ENCODE measurements at regions of chr1 and their contacts with region 1.

Region 1: GRCh38 chr1:27300341-27301051 is 21.5 kb upstream of the TMEM222 start:
- DNase-seq: peak; percentile 32
- ATAC-seq: peak; percentile 96
- H3K4me3 ChIP-seq: no peak overlapping the region
- H3K27ac ChIP-seq: no peak overlapping the region; the same call in 1 of the 2 replicates
- H3K4me1 ChIP-seq: peaks cover 5% of the 10 kb centered on the region
- H3K27me3 ChIP-seq: no peaks in the 10 kb centered on the region
- CTCF ChIP-seq: peak; percentile 99; a peak in 5 of 6 replicates
- EP300 ChIP-seq: no peak
- POLR2A ChIP-seq: no peak
- RAD21 ChIP-seq: peak; percentile 92

Region 2: DNA sequence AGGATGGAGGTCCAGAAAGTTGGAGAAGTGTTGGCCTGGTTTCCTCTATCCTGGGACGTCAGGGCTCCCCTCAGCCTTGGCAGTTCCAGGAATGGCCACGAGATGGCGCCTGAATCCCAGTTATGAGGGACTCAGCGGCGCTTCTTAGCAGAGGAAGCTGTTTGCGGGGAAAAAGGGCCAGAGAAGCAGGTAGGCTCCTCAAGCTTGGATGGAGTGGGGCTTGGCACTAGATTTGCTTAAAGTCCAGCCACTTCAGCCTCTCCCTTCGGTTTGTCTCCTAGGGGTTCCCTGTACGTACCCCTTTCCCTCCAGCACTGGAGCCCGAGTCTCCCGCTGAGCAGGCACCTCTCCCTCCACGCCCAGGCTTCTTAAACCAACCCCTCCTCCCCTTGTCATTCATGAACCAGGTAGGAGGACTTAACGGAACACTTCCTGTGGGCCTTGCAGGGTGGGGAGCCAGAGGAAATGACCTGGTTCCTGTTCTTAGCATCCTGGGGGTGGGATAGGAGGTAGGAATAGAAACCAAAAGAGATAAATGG is 255.8 kb before region 1 on chr1:
- CTCF ChIA-PET with region 1: interaction called, 20 read pairs
- POLR2A ChIA-PET with region 1: no interaction called
- RAD21 ChIA-PET with region 1: interaction called, 5 read pairs
- SMC1A ChIA-PET with region 1: interaction called, 5 read pairs
- in situ Hi-C with region 1: no loop called
- intact Hi-C with region 1: no loop called
- DNase-seq: peak; percentile 16
- ATAC-seq: peak; percentile 94
- H3K4me3 ChIP-seq: no peak overlapping the region
- H3K27ac ChIP-seq: no peak overlapping the region
- H3K4me1 ChIP-seq: peaks cover 5% of the 10 kb centered on the region; the same call in 1 of the 2 replicates
- H3K27me3 ChIP-seq: peaks cover 0 to 2% of the 10 kb centered on the region in 2 experiments; a peak in 3 of 4 replicates
- CTCF ChIP-seq: peak; percentile 96 to 99 (median 98)
- EP300 ChIP-seq: no peak
- POLR2A ChIP-seq: no peak
- RAD21 ChIP-seq: peak; percentile 95

Region 3: GRCh38 chr1:27111626-27112573 is 188.6 kb before region 1 on chr1:
- CTCF ChIA-PET with region 1: interaction called, 149 read pairs
- POLR2A ChIA-PET with region 1: no interaction called
- RAD21 ChIA-PET with region 1: interaction called, 5 read pairs
- SMC1A ChIA-PET with region 1: interaction called, 4 read pairs
- in situ Hi-C with region 1: no loop called
- intact Hi-C with region 1: no loop called
- DNase-seq: no peak
- ATAC-seq: peak; percentile 98
- H3K4me3 ChIP-seq: no peak overlapping the region
- H3K27ac ChIP-seq: peak overlapping the region; percentile 80
- H3K4me1 ChIP-seq: peaks cover 13% of the 10 kb centered on the region
- H3K27me3 ChIP-seq: no peaks in the 10 kb centered on the region
- CTCF ChIP-seq: peak; percentile 36 to 63 (median 53); a peak in 4 of 6 replicates
- EP300 ChIP-seq: no peak
- POLR2A ChIP-seq: peak; percentile 49
- RAD21 ChIP-seq: peak; percentile 75

Region 4: GRCh38 chr1:27284425-27285273 is 15.8 kb before region 1 on chr1:
- CTCF ChIA-PET with region 1: interaction called, 15 read pairs
- POLR2A ChIA-PET with region 1: no interaction called
- RAD21 ChIA-PET with region 1: interaction called, 4 read pairs
- SMC1A ChIA-PET with region 1: interaction called, 3 read pairs
- in situ Hi-C with region 1: no loop called
- intact Hi-C with region 1: no loop called
- DNase-seq: peak; percentile 28
- ATAC-seq: peak; percentile 98
- H3K4me3 ChIP-seq: no peak overlapping the region
- H3K27ac ChIP-seq: no peak overlapping the region
- H3K4me1 ChIP-seq: no peaks in the 10 kb centered on the region
- H3K27me3 ChIP-seq: no peaks in the 10 kb centered on the region
- CTCF ChIP-seq: peak; percentile 79 to 84 (median 82)
- EP300 ChIP-seq: no peak
- POLR2A ChIP-seq: no peak
- RAD21 ChIP-seq: peak; percentile 84

Region 5: GRCh38 chr1:27332536-27333281 is 32.2 kb after region 1 on chr1:
- CTCF ChIA-PET with region 1: interaction called, 32 read pairs
- POLR2A ChIA-PET with region 1: no interaction called
- RAD21 ChIA-PET with region 1: interaction called, 4 read pairs
- SMC1A ChIA-PET with region 1: no interaction called
- in situ Hi-C with region 1: no loop called
- intact Hi-C with region 1: no loop called
- DNase-seq: no peak
- ATAC-seq: peak; percentile 95
- H3K4me3 ChIP-seq: no peak overlapping the region
- H3K27ac ChIP-seq: no peak overlapping the region
- H3K4me1 ChIP-seq: no peaks in the 10 kb centered on the region
- H3K27me3 ChIP-seq: no peaks in the 10 kb centered on the region
- CTCF ChIP-seq: peak; percentile 63 to 88 (median 86)
- EP300 ChIP-seq: no peak
- POLR2A ChIP-seq: 0 out of 2 replicates have a peak, but pooled peaks have one; percentile 25
- RAD21 ChIP-seq: peak; percentile 57; the same call in 1 of the 2 replicates

Region 6: GRCh38 chr1:27392096-27392777 is 91.7 kb after region 1 on chr1 and contains the start of gene GPR3:
- CTCF ChIA-PET with region 1: interaction called, 265 read pairs
- POLR2A ChIA-PET with region 1: interaction called, 16 read pairs
- RAD21 ChIA-PET with region 1: interaction called, 103 read pairs
- SMC1A ChIA-PET with region 1: interaction called, 54 read pairs
- in situ Hi-C with region 1: loop called (anchors 5 kb)
- intact Hi-C with region 1: loop called (anchors 1 kb)
- DNase-seq: no peak
- ATAC-seq: peak; percentile 89
- H3K4me3 ChIP-seq: peak within 1 kb of the TSS; percentile 71
- H3K27ac ChIP-seq: no peak within 1 kb of the TSS
- H3K4me1 ChIP-seq: peaks cover 8% of the 10 kb centered on the region
- H3K27me3 ChIP-seq: no peaks in the 10 kb centered on the region
- CTCF ChIP-seq: peak; percentile 47 to 61 (median 52)
- EP300 ChIP-seq: no peak
- POLR2A ChIP-seq: no peak
- RAD21 ChIP-seq: peak; percentile 31
- polyA plus RNA-seq, gene GPR3: not detected

Measured in GM12878 (cell line).